Cardiac septum (tissue), 1 donor: ENCODE measurements at regions of chr7 and their contacts with region 1.

Region 1: GRCh38 chr7:150737265-150738055 is at the start of gene GIMAP5:
- DNase-seq: no peak
- total RNA-seq, gene GIMAP5: 6.6 TPM

Region 2: GRCh38 chr7:150675714-150676113 is 61.7 kb before region 1 on chr7:
- intact Hi-C with region 1: no loop called
- DNase-seq: no peak

Region 3: GRCh38 chr7:150716368-150716767 is 21.1 kb before region 1 on chr7 and contains the start of gene GIMAP1:
- intact Hi-C with region 1: loop called (anchors 2 kb)
- DNase-seq: peak; percentile 79
- total RNA-seq, gene GIMAP1: 3.5 TPM

Region 4: DNA sequence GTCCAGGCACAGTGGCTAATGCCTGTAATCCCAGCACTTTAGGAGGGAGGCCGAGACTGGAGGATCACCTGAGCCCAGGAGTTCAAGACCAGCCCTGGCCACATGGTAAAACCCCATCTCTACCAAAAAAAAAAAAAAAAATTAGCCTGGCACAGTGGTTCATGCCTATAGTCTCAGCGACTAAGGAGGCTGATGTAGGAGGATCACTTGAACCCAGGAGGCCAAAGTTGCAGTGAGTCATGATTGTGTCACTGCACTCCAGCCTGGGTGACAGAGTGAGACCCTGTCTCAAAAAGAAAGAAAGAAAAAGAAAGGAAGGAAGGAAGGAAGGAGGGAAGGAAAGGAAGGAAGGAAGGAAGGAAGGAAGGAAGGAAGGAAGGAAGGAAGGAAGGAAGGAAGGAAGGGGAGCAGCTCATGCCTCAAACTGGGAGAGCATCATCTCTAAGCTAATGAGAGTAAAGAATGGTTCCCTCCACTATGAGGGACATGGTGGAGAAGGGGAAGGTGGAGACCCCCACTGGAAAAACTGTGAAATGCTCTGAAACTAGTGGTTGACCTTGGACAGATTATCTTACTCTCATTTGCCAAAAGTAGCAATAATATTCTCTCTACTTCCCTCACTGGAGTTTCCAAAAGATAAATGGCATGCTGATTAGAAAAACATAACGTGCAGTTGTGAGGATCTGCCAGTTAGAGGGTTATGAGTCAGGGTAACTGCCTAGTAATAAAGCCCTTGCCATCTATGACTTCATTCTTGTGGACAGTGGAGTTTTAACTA is 16.6 kb after region 1 on chr7:
- intact Hi-C with region 1: loop called (anchors 1 kb)
- DNase-seq: no peak